Activated CD4-positive, alpha-beta T cell treated with anti-CD3 and anti-CD28 coated beads, Interleukin-2, amount 10 ng/mL, durations not matched to agents 24 days and 14 days (primary cell): ENCODE measurements at regions of chr1 and their contacts with region 1.

Region 1: GRCh38 chr1:206982216-206982615 is 12.0 kb upstream of the FCAMR start:
- DNase-seq: peak; percentile 90
- H3K4me3 Mint-ChIP-seq: no peak overlapping the region
- H3K27ac Mint-ChIP-seq: no peak overlapping the region
- H3K4me1 Mint-ChIP-seq: no peaks in the 10 kb centered on the region
- H3K27me3 Mint-ChIP-seq: peaks cover 52% of the 10 kb centered on the region

Region 2: DNA sequence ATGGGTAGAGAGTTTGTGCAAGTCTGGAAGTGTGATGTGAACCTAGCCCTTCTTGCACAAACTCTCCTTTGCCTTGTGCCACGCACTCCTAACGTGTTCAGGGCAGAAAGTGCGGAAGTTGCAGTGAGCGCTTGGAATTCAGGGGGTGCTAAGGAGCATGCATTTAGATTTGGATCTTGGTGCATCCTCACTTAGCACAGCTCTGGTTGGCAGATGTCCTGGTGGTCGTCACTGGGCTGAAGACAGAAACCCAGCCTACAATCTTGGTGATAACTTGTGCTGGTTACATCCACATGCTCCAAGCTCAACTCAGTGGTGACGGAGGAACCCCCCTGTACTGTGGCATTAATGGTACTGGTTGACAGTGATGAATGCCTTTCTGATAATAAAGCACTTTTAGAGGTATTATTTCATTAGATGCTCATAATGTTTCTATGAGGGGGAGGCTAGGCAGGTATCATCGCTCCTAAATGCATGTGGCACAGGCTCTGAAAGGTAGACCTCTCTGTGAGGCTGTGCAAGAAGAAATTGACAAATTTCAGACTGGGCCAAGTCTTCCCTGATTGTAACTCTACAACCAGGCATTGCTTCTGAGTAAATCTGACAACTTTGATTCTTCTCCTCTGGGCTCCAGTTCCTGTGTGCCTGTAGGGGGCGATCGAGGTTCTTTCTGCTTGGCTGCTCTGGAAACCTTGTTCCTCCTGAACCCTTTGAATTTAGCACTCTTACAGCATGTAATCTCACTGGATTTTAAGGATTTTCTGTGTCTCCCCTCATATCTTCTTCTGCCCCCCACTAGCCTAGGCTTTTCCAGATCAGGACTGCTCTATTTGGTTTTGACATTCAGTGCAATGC is 256.9 kb before region 1 on chr1:
- intact Hi-C with region 1: loop called (anchors 5 kb)
- DNase-seq: peak; percentile 89
- H3K4me3 Mint-ChIP-seq: no peak overlapping the region
- H3K27ac Mint-ChIP-seq: peak overlapping the region; percentile 17
- H3K4me1 Mint-ChIP-seq: peaks cover 39% of the 10 kb centered on the region
- H3K27me3 Mint-ChIP-seq: no peaks in the 10 kb centered on the region

Region 3: GRCh38 chr1:206808615-206809014 is 173.6 kb before region 1 on chr1:
- intact Hi-C with region 1: loop called (anchors 5 kb)
- DNase-seq: peak; percentile 87
- H3K4me3 Mint-ChIP-seq: no peak overlapping the region
- H3K27ac Mint-ChIP-seq: peak overlapping the region; percentile 12
- H3K4me1 Mint-ChIP-seq: peaks cover 47% of the 10 kb centered on the region
- H3K27me3 Mint-ChIP-seq: peaks cover 8% of the 10 kb centered on the region

Region 4: GRCh38 chr1:206865013-206865671 is 117.1 kb before region 1 on chr1 and contains the start of gene IL20:
- intact Hi-C with region 1: loop called (anchors 5 kb)
- DNase-seq: peak; percentile 95
- H3K4me3 Mint-ChIP-seq: no peak within 1 kb of the TSS
- H3K27ac Mint-ChIP-seq: peak within 1 kb of the TSS; percentile 32
- H3K4me1 Mint-ChIP-seq: peaks cover 9% of the 10 kb centered on the region
- H3K27me3 Mint-ChIP-seq: peaks cover 30% of the 10 kb centered on the region
- total RNA-seq, gene IL20: not detected in 2 replicates

Region 5: DNA sequence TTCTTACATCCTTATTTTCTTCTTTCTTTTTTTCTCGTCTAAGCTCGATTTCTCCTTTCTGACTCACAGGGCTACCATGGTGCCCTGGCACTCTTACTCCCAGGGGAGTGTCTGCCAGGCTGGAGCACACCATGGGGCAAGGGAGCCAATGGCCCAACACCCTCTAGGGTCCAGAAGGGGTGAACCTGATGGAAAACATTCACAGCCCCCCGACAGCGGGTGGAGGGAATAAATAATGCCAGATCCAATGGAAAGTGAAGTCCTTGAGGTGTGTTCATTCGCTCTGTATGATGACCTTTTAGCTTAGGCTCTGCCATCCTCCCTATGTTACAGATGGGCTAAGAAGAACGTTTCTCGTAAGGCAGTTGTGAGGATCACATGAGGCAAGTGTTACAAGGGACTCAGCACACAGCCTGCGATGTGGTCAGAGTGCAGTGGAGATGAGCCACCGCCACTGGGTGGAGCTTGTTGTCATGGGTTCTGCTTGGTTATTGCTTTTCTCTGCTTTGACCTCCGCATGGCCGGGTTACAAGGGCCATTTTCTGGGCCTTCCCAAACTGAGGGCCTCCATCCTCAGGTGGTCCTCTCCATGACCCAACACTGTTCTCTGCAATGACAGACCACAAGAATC is 57.0 kb before region 1 on chr1:
- intact Hi-C with region 1: no loop called
- DNase-seq: peak; percentile 85
- H3K4me3 Mint-ChIP-seq: no peak overlapping the region
- H3K27ac Mint-ChIP-seq: no peak overlapping the region
- H3K4me1 Mint-ChIP-seq: peaks cover 24% of the 10 kb centered on the region
- H3K27me3 Mint-ChIP-seq: no peaks in the 10 kb centered on the region

Region 6: GRCh38 chr1:206935491-206936067 is 46.6 kb before region 1 on chr1:
- intact Hi-C with region 1: loop called (anchors 1 kb)
- DNase-seq: peak; percentile 85
- H3K4me3 Mint-ChIP-seq: no peak overlapping the region
- H3K27ac Mint-ChIP-seq: no peak overlapping the region
- H3K4me1 Mint-ChIP-seq: peaks cover 2% of the 10 kb centered on the region
- H3K27me3 Mint-ChIP-seq: peaks cover 1% of the 10 kb centered on the region

Region 7: GRCh38 chr1:206992790-206993189 is 10.6 kb after region 1 on chr1:
- intact Hi-C with region 1: no loop called
- DNase-seq: no peak
- H3K4me3 Mint-ChIP-seq: no peak overlapping the region
- H3K27ac Mint-ChIP-seq: no peak overlapping the region
- H3K4me1 Mint-ChIP-seq: no peaks in the 10 kb centered on the region
- H3K27me3 Mint-ChIP-seq: peaks cover 57% of the 10 kb centered on the region

Region 8: GRCh38 chr1:207025144-207025880 is 43.1 kb after region 1 on chr1:
- intact Hi-C with region 1: no loop called
- DNase-seq: no peak
- H3K4me3 Mint-ChIP-seq: no peak overlapping the region
- H3K27ac Mint-ChIP-seq: no peak overlapping the region
- H3K4me1 Mint-ChIP-seq: peaks cover 7% of the 10 kb centered on the region
- H3K27me3 Mint-ChIP-seq: peaks cover 32% of the 10 kb centered on the region